ENCODE measurements at regions of chr14 and their contacts with region 1.

Region 1: GRCh38 chr14:103391048-103391447 is 5.8 kb downstream of the MARK3 start:
- DNase-seq: no peak
- ATAC-seq: no peak

Region 2: DNA sequence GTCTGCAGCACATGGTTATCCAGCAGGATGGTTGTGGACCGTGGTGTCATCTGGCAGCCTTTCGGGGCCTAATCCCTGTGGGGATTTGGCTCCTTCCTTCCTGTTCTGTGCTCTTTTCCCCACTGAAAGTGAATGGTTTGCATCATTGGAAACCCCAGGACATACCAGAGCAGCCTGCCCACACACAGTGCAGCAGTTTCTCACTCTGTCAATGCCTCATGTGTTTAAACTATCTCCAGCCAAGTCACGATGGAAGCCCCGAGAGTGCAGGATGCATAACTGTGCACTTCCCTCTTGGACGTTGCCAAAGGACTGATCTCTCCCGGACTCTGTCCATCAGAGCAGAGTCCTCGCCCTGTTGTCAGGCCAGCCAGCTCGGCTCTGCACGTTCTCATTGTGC is 497.6 kb before region 1 on chr14:
- intact Hi-C with region 1: no loop called
- DNase-seq: peak; percentile 70
- ATAC-seq: peak; percentile 85

Region 3: GRCh38 chr14:103281496-103282231 is 109.4 kb before region 1 on chr14:
- intact Hi-C with region 1: no loop called
- DNase-seq: no peak
- ATAC-seq: peak; percentile 89

Region 4: GRCh38 chr14:103427485-103428443 is 36.7 kb after region 1 on chr14:
- intact Hi-C with region 1: loop called (anchors 5 kb)
- DNase-seq: no peak
- ATAC-seq: peak; percentile 40

Region 5: GRCh38 chr14:103444837-103445524 is 53.9 kb after region 1 on chr14:
- intact Hi-C with region 1: loop called (anchors 5 kb)
- DNase-seq: no peak
- ATAC-seq: peak; percentile 60